ENCODE measurements at regions of chr17 and their contacts with region 1.

Region 1: GRCh38 chr17:40113110-40113906 is 8.5 kb upstream of the MSL1 start:
- DNase-seq: peak; percentile 97
- H3K4me3 Mint-ChIP-seq: peak overlapping the region; percentile 84
- H3K27ac Mint-ChIP-seq: peak overlapping the region; percentile 82
- H3K4me1 Mint-ChIP-seq: peaks cover 59% of the 10 kb centered on the region
- H3K27me3 Mint-ChIP-seq: peaks cover 8% of the 10 kb centered on the region

Region 2: DNA sequence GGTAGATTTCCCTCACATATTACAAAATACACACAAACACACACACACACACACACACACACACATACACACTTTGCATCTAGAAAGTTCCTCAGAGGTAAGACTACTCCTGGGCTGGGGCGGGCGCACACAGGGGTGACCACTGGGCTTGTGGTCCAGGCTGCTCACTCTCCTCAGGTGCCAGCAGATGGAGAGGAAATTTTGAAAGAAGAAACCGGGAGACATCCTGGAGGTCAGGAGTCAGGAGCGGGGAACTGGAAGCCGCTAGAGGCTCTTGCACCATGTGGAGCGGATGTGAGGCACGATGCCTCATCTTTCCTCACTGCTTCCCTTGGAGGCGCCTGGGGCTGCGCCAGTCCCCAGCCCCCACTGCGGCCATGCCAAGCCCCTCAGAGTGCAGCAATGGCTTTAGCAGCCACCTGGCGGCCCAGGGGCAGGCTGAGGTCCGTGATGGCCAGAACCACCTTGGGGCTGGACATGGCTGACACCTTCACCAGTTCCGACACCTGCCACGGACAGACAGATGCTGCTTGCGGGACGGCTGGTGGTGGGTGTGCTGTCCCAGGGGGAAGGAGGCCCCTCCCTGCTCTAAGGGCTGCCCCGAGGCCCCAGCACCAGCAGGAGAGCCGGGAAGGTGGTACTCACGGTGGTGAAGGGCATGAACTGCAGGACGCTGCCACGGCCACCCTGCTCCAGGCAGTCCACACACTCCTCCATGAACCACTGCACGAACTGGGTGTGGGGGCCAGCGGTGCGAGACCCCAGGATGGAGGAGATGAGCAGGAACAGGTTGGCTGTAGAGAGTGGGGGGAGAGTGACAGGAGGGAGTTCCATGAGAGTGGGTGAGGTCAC is 93.9 kb before region 1 on chr17:
- CTCF ChIA-PET with region 1: interaction called, 53 read pairs
- DNase-seq: no peak
- H3K4me3 Mint-ChIP-seq: no peak overlapping the region
- H3K27ac Mint-ChIP-seq: peak overlapping the region; percentile 58
- H3K4me1 Mint-ChIP-seq: peaks cover 2% of the 10 kb centered on the region
- H3K27me3 Mint-ChIP-seq: peaks cover 11% of the 10 kb centered on the region

Region 3: GRCh38 chr17:40075201-40075941 is 37.9 kb before region 1 on chr17:
- CTCF ChIA-PET with region 1: interaction called, 19 read pairs
- DNase-seq: peak; percentile 73
- H3K4me3 Mint-ChIP-seq: no peak overlapping the region
- H3K27ac Mint-ChIP-seq: peak overlapping the region; percentile 72
- H3K4me1 Mint-ChIP-seq: peaks cover 18% of the 10 kb centered on the region
- H3K27me3 Mint-ChIP-seq: peaks cover 3% of the 10 kb centered on the region

Region 4: DNA sequence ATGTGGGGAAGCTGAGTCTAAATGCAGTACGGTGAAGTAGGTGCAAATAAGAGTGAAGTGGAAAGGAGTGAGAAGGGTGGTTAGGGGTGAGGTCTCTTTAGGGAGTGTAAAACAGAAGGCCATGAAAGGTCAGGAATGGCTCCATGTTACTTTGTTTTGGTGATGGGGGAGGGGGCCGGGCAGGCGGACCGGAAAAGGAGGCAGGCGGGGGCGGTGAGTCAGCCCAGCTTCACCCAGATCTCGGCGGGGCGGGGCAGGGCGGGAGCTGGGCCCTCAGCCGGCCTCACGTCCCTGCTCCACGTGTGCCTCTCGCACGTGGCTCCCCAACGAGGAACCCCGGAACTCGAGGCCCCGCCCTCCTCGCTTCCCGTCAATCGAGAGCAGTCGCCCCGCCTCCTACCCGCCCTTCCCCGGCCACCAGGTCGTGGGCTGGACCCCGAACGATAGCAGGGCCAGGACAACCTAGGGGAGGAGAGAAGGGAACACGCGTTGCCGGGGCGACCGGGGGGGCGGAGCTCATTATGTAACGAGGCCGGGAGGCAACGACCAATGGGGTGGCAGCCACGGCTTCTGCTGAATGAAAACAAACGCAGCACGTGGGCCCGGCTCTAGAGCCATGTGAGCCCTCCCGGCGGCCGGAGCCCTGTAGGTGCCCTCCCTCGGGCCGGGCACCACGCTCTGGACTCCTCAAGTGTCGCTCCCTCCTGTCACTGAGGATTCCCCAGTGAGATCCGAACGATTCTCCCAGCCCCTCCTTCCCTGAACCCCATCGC is 14.3 kb before region 1 on chr17:
- CTCF ChIA-PET with region 1: interaction called, 95 read pairs
- DNase-seq: peak; percentile 99
- H3K4me3 Mint-ChIP-seq: peak overlapping the region; percentile 81
- H3K27ac Mint-ChIP-seq: peak overlapping the region; percentile 87
- H3K4me1 Mint-ChIP-seq: peaks cover 91% of the 10 kb centered on the region
- H3K27me3 Mint-ChIP-seq: peaks cover 26% of the 10 kb centered on the region

Region 5: GRCh38 chr17:40168262-40168832 is 55.0 kb after region 1 on chr17:
- CTCF ChIA-PET with region 1: interaction called, 116 read pairs
- DNase-seq: peak; percentile 52
- H3K4me3 Mint-ChIP-seq: no peak overlapping the region
- H3K27ac Mint-ChIP-seq: peak overlapping the region; percentile 43
- H3K4me1 Mint-ChIP-seq: peaks cover 4% of the 10 kb centered on the region
- H3K27me3 Mint-ChIP-seq: no peaks in the 10 kb centered on the region

Region 6: GRCh38 chr17:40191237-40192208 is 78.2 kb after region 1 on chr17:
- CTCF ChIA-PET with region 1: interaction called, 87 read pairs
- DNase-seq: peak; percentile 79
- H3K4me3 Mint-ChIP-seq: peak overlapping the region; percentile 84
- H3K27ac Mint-ChIP-seq: peak overlapping the region; percentile 33
- H3K4me1 Mint-ChIP-seq: peaks cover 29% of the 10 kb centered on the region
- H3K27me3 Mint-ChIP-seq: peaks cover 26% of the 10 kb centered on the region

Region 7: GRCh38 chr17:40287494-40288369 is 174.4 kb after region 1 on chr17 and contains the start of gene CDC6:
- CTCF ChIA-PET with region 1: interaction called, 38 read pairs
- DNase-seq: peak; percentile 99
- H3K4me3 Mint-ChIP-seq: peak within 1 kb of the TSS; percentile 100
- H3K27ac Mint-ChIP-seq: peak within 1 kb of the TSS; percentile 98
- H3K4me1 Mint-ChIP-seq: peaks cover 53% of the 10 kb centered on the region
- H3K27me3 Mint-ChIP-seq: peaks cover 3% of the 10 kb centered on the region